A549 (cell line): ENCODE measurements at regions of chr2 and their contacts with region 1.

Region 1: DNA sequence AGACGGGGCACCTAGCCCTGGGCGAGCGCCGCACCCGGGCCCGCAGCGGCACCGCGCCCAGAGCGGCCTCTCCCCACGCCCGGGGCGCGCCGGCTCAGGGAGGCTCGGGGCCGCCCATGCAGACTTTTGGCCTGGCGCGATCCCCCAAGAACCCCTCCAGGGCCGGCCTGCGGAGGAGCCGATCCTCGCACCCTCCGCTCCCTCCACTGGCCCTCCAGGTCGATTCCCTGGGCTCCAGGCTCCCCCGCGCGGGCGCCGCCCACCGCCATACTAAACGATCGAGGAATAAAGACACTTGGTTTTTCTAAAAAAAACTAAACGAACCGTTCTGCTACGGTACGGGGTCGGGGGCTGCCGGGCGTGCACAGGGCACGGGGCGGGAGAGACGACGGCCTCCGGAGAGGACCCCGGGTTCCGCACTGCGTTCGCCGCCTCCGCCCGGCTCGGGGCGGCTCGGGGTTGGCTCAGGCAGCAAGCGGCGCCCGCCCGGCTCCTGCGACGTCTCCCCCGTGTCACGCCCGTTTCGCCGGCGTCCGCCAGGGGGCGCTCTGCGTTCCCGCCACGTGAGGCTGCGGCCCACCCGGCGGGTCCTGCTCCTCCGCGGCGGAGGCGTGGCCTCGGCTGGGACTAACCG is 365 bp upstream of the KHK start:
- DNase-seq: peak; percentile 95 to 97
- ATAC-seq: peak; percentile 73 to 89
- H3K4me3 ChIP-seq: peak overlapping the region; percentile 70
- H3K27ac ChIP-seq: peak overlapping the region; percentile 90 to 91
- H3K4me1 ChIP-seq: peaks cover 17% of the 10 kb centered on the region
- CTCF ChIP-seq: peak; percentile 98
- EP300 ChIP-seq: no peak
- POLR2A ChIP-seq: peak; percentile 41; the same call in 1 of the 2 replicates
- RAD21 ChIP-seq: peak; percentile 31 to 63; a peak in 4 of 5 replicates

Region 2: DNA sequence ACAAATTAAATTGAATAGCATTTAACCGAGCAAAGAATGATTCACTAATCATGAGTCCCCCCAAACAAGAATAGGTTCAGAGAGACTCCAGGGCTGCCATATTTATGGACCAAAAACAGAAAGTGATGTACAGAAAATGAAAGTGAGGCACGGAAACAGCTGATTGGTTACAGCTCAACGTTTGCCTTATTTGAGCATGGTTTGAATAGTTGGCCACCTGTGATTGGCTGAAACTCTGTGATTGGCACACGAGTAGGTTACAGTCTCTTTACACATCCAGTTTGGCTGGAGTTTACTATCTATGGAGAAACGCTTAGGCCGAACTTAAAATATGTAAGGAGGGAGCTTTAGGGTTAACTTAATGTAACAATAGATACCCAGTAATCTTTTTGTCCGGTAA is 265.3 kb before region 1 on chr2:
- CTCF ChIA-PET with region 1: no interaction called
- POLR2A ChIA-PET with region 1: no interaction called
- DNase-seq: no peak
- ATAC-seq: no peak
- H3K4me3 ChIP-seq: no peak overlapping the region
- H3K27ac ChIP-seq: no peak overlapping the region
- H3K4me1 ChIP-seq: no peaks in the 10 kb centered on the region
- CTCF ChIP-seq: no peak
- EP300 ChIP-seq: no peak
- POLR2A ChIP-seq: no peak
- RAD21 ChIP-seq: no peak

Region 3: GRCh38 chr2:27003857-27004256 is 82.3 kb before region 1 on chr2:
- CTCF ChIA-PET with region 1: no interaction called
- POLR2A ChIA-PET with region 1: no interaction called
- DNase-seq: no peak
- ATAC-seq: no peak
- H3K4me3 ChIP-seq: no peak overlapping the region
- H3K27ac ChIP-seq: no peak overlapping the region
- H3K4me1 ChIP-seq: peaks cover 7% of the 10 kb centered on the region; the same call in 1 of the 3 replicates
- CTCF ChIP-seq: no peak
- EP300 ChIP-seq: no peak
- POLR2A ChIP-seq: no peak
- RAD21 ChIP-seq: no peak

Region 4: DNA sequence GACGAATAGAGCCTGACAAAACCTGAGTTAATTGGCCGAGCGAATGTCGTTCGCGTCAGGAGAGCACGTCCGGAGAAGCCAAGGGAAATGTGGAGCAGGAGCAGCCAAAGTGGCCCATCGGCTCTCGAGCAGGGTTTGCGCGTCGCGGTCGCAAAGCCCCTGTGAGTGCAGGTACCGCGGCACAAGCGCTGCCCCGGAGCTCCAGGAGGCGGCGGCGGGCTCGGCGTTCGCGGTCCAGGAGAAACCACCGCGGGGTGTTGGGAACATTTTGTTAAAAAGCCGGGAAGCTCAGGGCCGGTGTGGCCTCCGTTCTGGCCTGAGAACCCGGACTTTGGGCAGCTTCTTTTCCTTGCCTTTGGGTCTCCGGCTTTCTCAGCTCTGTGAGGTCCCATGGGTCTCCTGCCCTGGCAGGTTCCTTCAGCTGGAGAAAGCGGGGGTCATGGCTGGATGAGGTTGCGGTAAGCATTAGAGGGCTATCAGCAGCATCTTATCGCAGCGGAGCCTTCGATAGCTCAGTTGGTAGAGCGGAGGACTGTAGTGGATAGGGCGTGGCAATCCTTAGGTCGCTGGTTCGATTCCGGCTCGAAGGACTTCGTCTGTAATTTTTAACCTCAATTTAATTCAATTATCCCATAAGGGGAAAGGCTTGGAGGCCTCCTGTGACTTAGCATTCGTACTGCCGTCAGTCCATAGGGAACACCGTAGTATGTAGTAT is 35.8 kb before region 1 on chr2:
- CTCF ChIA-PET with region 1: interaction called, 37 read pairs
- POLR2A ChIA-PET with region 1: interaction called, 12 read pairs
- DNase-seq: peak; percentile 95 to 97
- ATAC-seq: peak; percentile 77 to 86
- H3K4me3 ChIP-seq: peak overlapping the region; percentile 86
- H3K27ac ChIP-seq: peak overlapping the region; percentile 83 to 93
- H3K4me1 ChIP-seq: peaks cover 13% of the 10 kb centered on the region; the same call in 2 of the 3 replicates
- CTCF ChIP-seq: no peak
- EP300 ChIP-seq: no peak
- POLR2A ChIP-seq: peak; percentile 97
- RAD21 ChIP-seq: no peak

Region 5: GRCh38 chr2:27071277-27071989 is 14.8 kb before region 1 on chr2 and contains the start of gene OST4:
- CTCF ChIA-PET with region 1: interaction called, 253 read pairs
- POLR2A ChIA-PET with region 1: interaction called, 18 read pairs
- DNase-seq: peak; percentile 93 to 97
- ATAC-seq: peak; percentile 90 to 96
- H3K4me3 ChIP-seq: peak within 1 kb of the TSS; percentile 92
- H3K27ac ChIP-seq: peak within 1 kb of the TSS; percentile 88 to 93
- H3K4me1 ChIP-seq: peaks cover 19% of the 10 kb centered on the region
- CTCF ChIP-seq: no peak
- EP300 ChIP-seq: no peak
- POLR2A ChIP-seq: peak; percentile 67
- RAD21 ChIP-seq: no peak
- polyA plus RNA-seq, gene OST4: 392 and 408 TPM in 2 replicates

Region 6: GRCh38 chr2:27123302-27124231 is 37.4 kb after region 1 on chr2 and contains the start of gene ABHD1:
- CTCF ChIA-PET with region 1: interaction called, 12 read pairs
- POLR2A ChIA-PET with region 1: no interaction called
- DNase-seq: peak; percentile 36 to 69
- ATAC-seq: peak; percentile 79 to 91
- H3K4me3 ChIP-seq: peak within 1 kb of the TSS; percentile 56
- H3K27ac ChIP-seq: peak within 1 kb of the TSS; percentile 73 to 87
- H3K4me1 ChIP-seq: peaks cover 3% of the 10 kb centered on the region; the same call in 1 of the 3 replicates
- CTCF ChIP-seq: no peak
- EP300 ChIP-seq: no peak
- POLR2A ChIP-seq: peak; percentile 89
- RAD21 ChIP-seq: no peak
- polyA plus RNA-seq, gene ABHD1: 1.9 and 2.4 TPM in 2 replicates

Region 7: DNA sequence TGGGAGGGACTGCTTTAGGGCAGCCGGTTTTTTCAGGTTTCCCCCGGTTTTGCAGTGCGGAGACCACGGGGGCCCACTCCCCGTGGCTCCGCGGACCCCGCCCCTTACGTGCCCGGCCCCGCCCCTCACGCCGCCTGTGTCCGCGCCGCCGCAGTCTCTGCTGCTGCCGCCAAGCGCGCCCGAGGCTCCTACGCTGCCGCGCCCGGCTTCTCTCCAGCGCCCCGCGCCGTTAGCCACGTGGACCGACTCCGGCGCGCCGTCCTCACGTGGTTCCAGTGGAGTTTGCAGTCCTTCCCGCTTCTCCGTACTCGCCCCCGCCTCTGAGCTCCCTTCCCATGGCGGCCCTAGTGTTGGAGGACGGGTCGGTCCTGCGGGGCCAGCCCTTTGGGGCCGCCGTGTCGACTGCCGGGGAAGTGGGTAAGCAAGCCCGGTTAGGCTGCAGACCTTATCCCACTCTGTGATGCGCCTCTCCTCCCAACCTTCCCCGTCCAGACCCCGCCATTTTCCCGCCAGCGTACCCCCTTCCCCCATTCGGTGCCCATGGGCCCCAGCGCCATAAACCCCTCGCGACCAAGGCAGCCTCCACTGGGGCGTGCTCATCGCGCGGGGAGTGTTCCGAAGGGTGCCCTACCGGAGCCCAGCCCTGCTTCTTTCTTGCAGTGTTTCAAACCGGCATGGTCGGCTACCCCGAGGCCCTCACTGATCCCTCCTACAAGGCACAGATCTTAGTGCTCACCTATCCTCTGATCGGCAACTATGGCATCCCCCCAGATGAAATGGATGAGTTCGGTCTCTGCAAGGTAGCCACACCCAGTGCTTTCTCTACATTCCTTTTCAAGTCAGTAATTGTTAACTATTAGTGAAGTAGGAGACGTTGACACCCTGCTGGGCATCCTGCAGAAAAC is 131.3 kb after region 1 on chr2 and contains the start of gene CAD:
- CTCF ChIA-PET with region 1: interaction called, 3 read pairs
- POLR2A ChIA-PET with region 1: interaction called, 12 read pairs
- DNase-seq: peak; percentile 84 to 92
- ATAC-seq: peak; percentile 88 to 92
- H3K4me3 ChIP-seq: peak within 1 kb of the TSS; percentile 65
- H3K27ac ChIP-seq: peak within 1 kb of the TSS; percentile 94 to 95
- H3K4me1 ChIP-seq: peaks cover 28% of the 10 kb centered on the region
- CTCF ChIP-seq: no peak
- EP300 ChIP-seq: no peak
- POLR2A ChIP-seq: peak; percentile 90
- RAD21 ChIP-seq: no peak
- polyA plus RNA-seq, gene CAD: 50.5 and 61.8 TPM in 2 replicates

Region 8: GRCh38 chr2:27256855-27257454 is 170.7 kb after region 1 on chr2:
- CTCF ChIA-PET with region 1: no interaction called
- POLR2A ChIA-PET with region 1: no interaction called
- DNase-seq: no peak
- ATAC-seq: no peak
- H3K4me3 ChIP-seq: no peak overlapping the region
- H3K27ac ChIP-seq: no peak overlapping the region
- H3K4me1 ChIP-seq: peaks cover 7% of the 10 kb centered on the region
- CTCF ChIP-seq: no peak
- EP300 ChIP-seq: no peak
- POLR2A ChIP-seq: no peak
- RAD21 ChIP-seq: no peak

Region 9: DNA sequence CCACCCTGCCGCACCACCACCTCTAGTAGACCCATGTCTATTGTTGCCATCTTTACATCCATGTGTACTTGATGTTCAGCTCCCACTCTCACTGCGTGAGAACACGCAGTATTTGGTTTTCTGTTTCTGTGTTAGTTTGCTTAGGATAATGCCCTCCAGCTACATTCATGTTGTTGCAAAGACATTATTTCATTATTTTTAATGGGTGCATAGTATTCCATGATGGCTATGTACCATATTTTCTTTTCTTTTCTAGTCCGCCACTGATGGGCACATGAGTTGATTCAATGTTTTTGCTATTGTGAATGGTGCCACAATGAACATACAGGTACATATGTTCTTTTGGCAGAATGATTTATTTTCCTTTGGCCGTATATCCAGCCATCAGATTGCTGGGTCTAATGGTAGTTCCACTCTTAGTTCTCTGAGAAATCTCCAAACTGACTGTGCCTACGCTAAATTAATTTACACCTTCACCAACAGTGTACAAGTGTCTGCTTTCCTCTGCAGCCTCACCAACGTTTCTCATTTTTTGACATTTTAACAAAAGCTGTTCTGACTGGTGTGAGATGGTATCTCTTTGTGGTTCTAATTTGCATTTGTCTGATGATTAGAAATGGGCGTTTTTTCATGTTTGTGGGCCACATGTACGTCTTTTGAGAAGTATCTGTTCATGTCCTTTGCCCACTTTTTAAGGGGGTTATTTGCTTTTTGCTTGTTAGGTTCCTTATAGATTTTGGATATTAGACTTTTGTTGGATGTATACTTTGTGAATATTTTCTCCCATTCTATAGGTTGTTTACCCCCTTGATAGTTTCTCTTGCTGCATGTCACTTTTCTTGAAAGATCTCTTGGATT is 304.8 kb after region 1 on chr2:
- CTCF ChIA-PET with region 1: no interaction called
- POLR2A ChIA-PET with region 1: no interaction called
- DNase-seq: no peak
- ATAC-seq: no peak
- H3K4me3 ChIP-seq: no peak overlapping the region
- H3K27ac ChIP-seq: no peak overlapping the region
- H3K4me1 ChIP-seq: no peaks in the 10 kb centered on the region
- CTCF ChIP-seq: no peak
- EP300 ChIP-seq: no peak
- POLR2A ChIP-seq: no peak
- RAD21 ChIP-seq: no peak